ENCODE measurements at regions of chr19 and their contacts with region 1.

Region 1: GRCh38 chr19:41706741-41707501 is 1.5 kb upstream of the CEACAM5 start:
- DNase-seq: peak; percentile 88
- ATAC-seq: peak; percentile 96
- H3K4me3 Mint-ChIP-seq: peak overlapping the region; percentile 69
- H3K27ac Mint-ChIP-seq: no peak overlapping the region
- H3K4me1 Mint-ChIP-seq: 0 out of 2 replicates have a peak, but pooled peaks cover 2% of the 10 kb centered on the region
- H3K27me3 Mint-ChIP-seq: peaks cover 22% of the 10 kb centered on the region
- CTCF ChIP-seq: peak; percentile 96

Region 2: GRCh38 chr19:41597600-41598041 is 109.3 kb before region 1 on chr19:
- CTCF ChIA-PET with region 1: interaction called, 16 read pairs
- POLR2A ChIA-PET with region 1: no interaction called
- DNase-seq: peak; percentile 80
- ATAC-seq: peak; percentile 84
- H3K4me3 Mint-ChIP-seq: no peak overlapping the region
- H3K27ac Mint-ChIP-seq: no peak overlapping the region
- H3K4me1 Mint-ChIP-seq: peaks cover 16% of the 10 kb centered on the region
- H3K27me3 Mint-ChIP-seq: peaks cover 78% of the 10 kb centered on the region
- CTCF ChIP-seq: peak; percentile 96

Region 3: DNA sequence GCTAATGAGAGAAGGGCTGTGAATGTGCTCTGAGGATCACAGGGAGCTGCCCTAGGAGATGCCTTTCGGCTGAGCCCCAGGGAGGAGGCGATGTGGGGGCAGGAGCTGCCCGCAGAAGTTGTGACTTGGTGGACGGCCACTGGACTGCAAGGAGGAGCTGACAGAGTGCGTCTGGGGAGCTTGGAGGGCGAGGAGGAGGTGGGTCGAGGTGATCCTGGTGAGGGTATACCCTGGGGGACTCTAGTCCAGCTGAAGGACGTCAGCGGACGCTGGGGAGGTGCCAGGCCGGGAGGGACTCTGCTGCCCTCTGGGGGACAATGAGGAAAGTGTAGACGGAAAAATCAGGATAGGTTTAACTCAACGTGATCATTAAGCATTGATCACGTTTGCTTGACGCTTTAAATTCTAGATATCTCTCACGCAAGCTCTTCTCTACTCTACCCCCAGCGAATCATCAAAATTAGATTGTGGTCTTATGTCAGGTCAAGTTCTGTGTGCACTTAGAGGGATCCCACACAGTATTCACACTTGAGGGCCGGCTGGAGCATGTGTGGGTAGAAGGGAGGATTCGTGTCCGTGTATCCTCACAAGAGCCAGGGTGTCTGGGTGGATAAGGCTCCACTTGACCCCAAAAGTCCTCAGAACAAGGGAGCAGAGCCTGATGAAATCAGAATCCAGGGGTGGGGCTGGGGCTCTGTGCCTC is 15.5 kb before region 1 on chr19:
- CTCF ChIA-PET with region 1: interaction called, 69 read pairs
- POLR2A ChIA-PET with region 1: no interaction called
- DNase-seq: peak; percentile 69
- ATAC-seq: peak; percentile 86
- H3K4me3 Mint-ChIP-seq: no peak overlapping the region; the same call in 1 of the 2 replicates
- H3K27ac Mint-ChIP-seq: no peak overlapping the region
- H3K4me1 Mint-ChIP-seq: peaks cover 2% of the 10 kb centered on the region; the same call in 1 of the 2 replicates
- H3K27me3 Mint-ChIP-seq: peaks cover 39% of the 10 kb centered on the region
- CTCF ChIP-seq: peak; percentile 61

Region 4: DNA sequence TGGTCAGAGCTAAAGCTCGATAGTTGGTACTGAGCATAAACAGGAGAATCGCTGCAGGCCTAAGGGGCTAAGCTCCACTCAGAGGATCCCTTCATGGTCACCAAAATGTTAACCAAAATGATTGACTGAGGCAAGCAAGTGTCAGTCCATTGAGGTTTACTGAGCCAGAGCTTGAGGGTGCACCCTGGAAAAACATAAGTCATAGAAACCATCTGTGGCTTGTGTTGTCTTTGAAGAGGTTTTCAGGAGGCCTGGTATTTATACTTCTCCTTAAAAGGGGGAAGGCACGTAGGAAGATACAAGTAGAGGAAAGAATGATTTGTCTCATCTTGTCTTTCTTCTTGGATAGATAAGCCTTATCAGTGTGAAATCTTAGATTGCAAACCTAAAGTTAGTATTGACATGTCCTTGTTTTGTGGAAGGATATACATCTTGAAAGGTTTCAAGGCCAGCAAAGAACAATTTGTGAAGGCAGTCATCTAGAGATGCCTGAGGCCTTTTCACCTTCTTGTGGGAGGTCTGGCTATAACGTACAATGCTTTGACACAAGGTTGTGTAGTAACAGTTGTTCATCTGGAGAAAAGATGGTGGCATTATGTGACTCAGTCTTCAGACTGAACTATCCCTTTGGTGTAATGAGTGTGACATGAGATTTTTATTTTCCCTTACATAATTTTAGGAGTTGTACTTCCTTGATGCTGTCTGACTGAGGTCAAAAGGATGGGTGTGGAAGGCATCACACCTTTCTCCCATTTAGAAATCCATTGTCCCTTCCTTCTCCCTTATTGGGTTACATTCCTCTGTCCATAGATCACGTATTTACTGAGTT is 33.7 kb after region 1 on chr19:
- CTCF ChIA-PET with region 1: interaction called, 133 read pairs
- POLR2A ChIA-PET with region 1: no interaction called
- DNase-seq: no peak
- ATAC-seq: no peak
- H3K4me3 Mint-ChIP-seq: no peak overlapping the region
- H3K27ac Mint-ChIP-seq: no peak overlapping the region
- H3K4me1 Mint-ChIP-seq: no peaks in the 10 kb centered on the region
- H3K27me3 Mint-ChIP-seq: peaks cover 14% of the 10 kb centered on the region
- CTCF ChIP-seq: no peak

Region 5: GRCh38 chr19:41785653-41786052 is 78.7 kb after region 1 on chr19:
- CTCF ChIA-PET with region 1: interaction called, 32 read pairs
- POLR2A ChIA-PET with region 1: no interaction called
- DNase-seq: peak; percentile 73
- ATAC-seq: peak; percentile 95
- H3K4me3 Mint-ChIP-seq: peak overlapping the region; percentile 62
- H3K27ac Mint-ChIP-seq: no peak overlapping the region
- H3K4me1 Mint-ChIP-seq: peaks cover 6% of the 10 kb centered on the region
- H3K27me3 Mint-ChIP-seq: peaks cover 43% of the 10 kb centered on the region
- CTCF ChIP-seq: peak; percentile 76

Region 6: GRCh38 chr19:41821003-41821735 is 114.2 kb after region 1 on chr19:
- CTCF ChIA-PET with region 1: interaction called, 17 read pairs
- POLR2A ChIA-PET with region 1: no interaction called
- DNase-seq: peak; percentile 66
- ATAC-seq: peak; percentile 99
- H3K4me3 Mint-ChIP-seq: no peak overlapping the region
- H3K27ac Mint-ChIP-seq: no peak overlapping the region
- H3K4me1 Mint-ChIP-seq: no peaks in the 10 kb centered on the region
- H3K27me3 Mint-ChIP-seq: peaks cover 4% of the 10 kb centered on the region; the same call in 1 of the 2 replicates
- CTCF ChIP-seq: peak; percentile 37; the same call in 1 of the 2 replicates

Region 7: GRCh38 chr19:41912899-41913537 is 206.1 kb after region 1 on chr19:
- CTCF ChIA-PET with region 1: no interaction called
- POLR2A ChIA-PET with region 1: no interaction called
- DNase-seq: peak; percentile 48
- ATAC-seq: peak; percentile 24
- H3K4me3 Mint-ChIP-seq: peak overlapping the region; percentile 68
- H3K27ac Mint-ChIP-seq: no peak overlapping the region
- H3K4me1 Mint-ChIP-seq: peaks cover 9% of the 10 kb centered on the region
- H3K27me3 Mint-ChIP-seq: peaks cover 7% of the 10 kb centered on the region
- CTCF ChIP-seq: no peak

Measured in WTC11 (cell line).